ENCODE measurements at regions of chr12 and their contacts with region 1.

Region 1: DNA sequence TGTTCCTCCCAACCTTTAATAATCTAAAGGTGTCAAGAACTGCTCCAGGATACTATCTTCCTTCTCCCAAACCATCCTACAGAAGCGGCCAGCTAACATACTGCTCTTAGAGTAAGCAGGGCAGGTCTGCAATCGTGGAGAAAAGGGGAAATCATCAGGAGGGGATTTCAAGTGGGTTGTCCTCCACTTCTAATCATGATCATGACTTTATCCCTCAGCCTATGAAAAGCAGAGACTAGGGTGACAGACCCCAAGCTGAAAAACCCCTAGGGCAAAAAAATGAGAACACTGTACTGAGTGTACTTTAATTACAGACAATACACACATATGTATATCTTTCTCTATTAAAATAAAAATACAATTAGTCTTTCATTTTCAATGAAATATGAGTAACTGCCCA is 13.9 kb downstream of the DUSP16 start:
- DNase-seq: no peak
- H3K4me3 Mint-ChIP-seq: no peak overlapping the region
- H3K27ac Mint-ChIP-seq: no peak overlapping the region
- H3K4me1 Mint-ChIP-seq: peaks cover 27% of the 10 kb centered on the region
- H3K27me3 Mint-ChIP-seq: no peaks in the 10 kb centered on the region

Region 2: GRCh38 chr12:12534166-12534866 is 14.4 kb before region 1 on chr12:
- intact Hi-C with region 1: loop called (anchors 2 kb)
- DNase-seq: no peak
- H3K4me3 Mint-ChIP-seq: no peak overlapping the region
- H3K27ac Mint-ChIP-seq: peak overlapping the region; percentile 42
- H3K4me1 Mint-ChIP-seq: peaks cover 43% of the 10 kb centered on the region
- H3K27me3 Mint-ChIP-seq: no peaks in the 10 kb centered on the region

Region 3: GRCh38 chr12:12582895-12583303 is 34.2 kb after region 1 on chr12:
- intact Hi-C with region 1: no loop called
- DNase-seq: peak; percentile 30
- H3K4me3 Mint-ChIP-seq: peak overlapping the region; percentile 21
- H3K27ac Mint-ChIP-seq: peak overlapping the region; percentile 88
- H3K4me1 Mint-ChIP-seq: peaks cover 45% of the 10 kb centered on the region
- H3K27me3 Mint-ChIP-seq: no peaks in the 10 kb centered on the region

Region 4: GRCh38 chr12:12999959-13000615 is 451.4 kb after region 1 on chr12 and contains the start of gene HEBP1:
- intact Hi-C with region 1: no loop called
- DNase-seq: peak; percentile 91
- H3K4me3 Mint-ChIP-seq: peak within 1 kb of the TSS; percentile 87
- H3K27ac Mint-ChIP-seq: peak within 1 kb of the TSS; percentile 86
- H3K4me1 Mint-ChIP-seq: peaks cover 37% of the 10 kb centered on the region
- H3K27me3 Mint-ChIP-seq: peaks cover 34% of the 10 kb centered on the region
- total RNA-seq, gene HEBP1: 9.5 and 11.3 TPM in 2 replicates